ENCODE measurements at regions of chr13 and their contacts with region 1.

Region 1: GRCh38 chr13:39684531-39685137 is 29.2 kb downstream of the COG6 start:
- DNase-seq: peak; percentile 54
- H3K4me3 ChIP-seq: no peak overlapping the region
- H3K27ac ChIP-seq: no peak overlapping the region
- H3K4me1 ChIP-seq: no peaks in the 10 kb centered on the region
- H3K27me3 ChIP-seq: no peaks in the 10 kb centered on the region
- CTCF ChIP-seq: peak in 1 of 2 donors; percentile 8
- POLR2A ChIP-seq: no peak

Region 2: DNA sequence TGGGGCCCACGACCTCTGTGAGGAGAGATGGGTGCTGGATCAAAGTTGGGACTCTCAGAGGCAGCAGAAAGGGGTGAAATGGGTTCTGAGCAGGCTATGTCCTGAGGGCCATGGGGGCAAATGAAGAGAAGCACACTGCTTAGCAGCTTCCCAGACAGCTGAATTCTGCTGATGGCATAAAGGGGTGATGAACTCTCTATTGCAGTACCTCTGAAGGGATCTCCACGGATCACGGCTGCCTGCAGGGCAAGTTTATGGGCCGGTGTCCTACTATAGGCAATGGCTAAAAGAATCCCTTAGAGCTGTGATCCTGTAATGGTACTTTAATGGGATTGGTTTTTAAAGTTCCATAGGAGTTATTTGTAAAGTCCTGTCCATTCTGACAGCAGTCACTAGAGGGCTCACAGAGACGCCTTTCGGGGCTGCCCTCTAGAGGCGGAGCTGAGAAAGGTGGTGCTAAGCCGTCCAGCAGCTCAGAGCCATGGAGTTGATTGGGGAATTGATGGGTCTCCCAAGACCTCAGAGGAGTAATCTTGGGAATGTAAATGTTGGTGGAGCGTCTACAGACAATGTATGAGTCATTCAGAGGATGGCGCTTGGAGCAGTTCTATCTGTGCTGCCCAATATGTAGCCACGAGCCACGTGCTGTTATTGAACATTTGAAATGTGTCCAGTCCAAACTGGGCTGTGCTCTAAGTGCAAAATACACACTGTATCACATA is 258.1 kb after region 1 on chr13:
- CTCF ChIA-PET with region 1: interaction called, 8 read pairs
- POLR2A ChIA-PET with region 1: no interaction called
- dilution Hi-C with region 1: no loop called
- intact Hi-C with region 1: loop called (anchors 10 kb)
- DNase-seq: peak; percentile 71
- H3K4me3 ChIP-seq: no peak overlapping the region
- H3K27ac ChIP-seq: no peak overlapping the region
- H3K4me1 ChIP-seq: peaks cover 3% of the 10 kb centered on the region
- H3K27me3 ChIP-seq: no peaks in the 10 kb centered on the region
- CTCF ChIP-seq: peak; percentile 86 to 94
- POLR2A ChIP-seq: no peak